ENCODE measurements at regions of chr5 and their contacts with region 1.

Region 1: GRCh38 chr5:91383027-91383955 is at the start of gene ARRDC3:
- DNase-seq: peak; percentile 96 to 98
- ATAC-seq: peak; percentile 30 to 61 (median 33)
- H3K4me3 ChIP-seq: peak within 1 kb of the TSS; percentile 82
- H3K4me3 Mint-ChIP-seq: peak within 1 kb of the TSS; percentile 99
- H3K27ac ChIP-seq: peak within 1 kb of the TSS; percentile 97
- H3K27ac Mint-ChIP-seq: peak within 1 kb of the TSS; percentile 100
- H3K4me1 ChIP-seq: no peaks in the 10 kb centered on the region
- H3K4me1 Mint-ChIP-seq: peaks cover 32 to 35% of the 10 kb centered on the region in 2 donors
- H3K27me3 ChIP-seq: no peaks in the 10 kb centered on the region
- H3K27me3 Mint-ChIP-seq: no peaks in the 10 kb centered on the region
- CTCF ChIP-seq: no peak
- total RNA-seq, gene ARRDC3: 117 to 375 (median 133) TPM

Region 2: DNA sequence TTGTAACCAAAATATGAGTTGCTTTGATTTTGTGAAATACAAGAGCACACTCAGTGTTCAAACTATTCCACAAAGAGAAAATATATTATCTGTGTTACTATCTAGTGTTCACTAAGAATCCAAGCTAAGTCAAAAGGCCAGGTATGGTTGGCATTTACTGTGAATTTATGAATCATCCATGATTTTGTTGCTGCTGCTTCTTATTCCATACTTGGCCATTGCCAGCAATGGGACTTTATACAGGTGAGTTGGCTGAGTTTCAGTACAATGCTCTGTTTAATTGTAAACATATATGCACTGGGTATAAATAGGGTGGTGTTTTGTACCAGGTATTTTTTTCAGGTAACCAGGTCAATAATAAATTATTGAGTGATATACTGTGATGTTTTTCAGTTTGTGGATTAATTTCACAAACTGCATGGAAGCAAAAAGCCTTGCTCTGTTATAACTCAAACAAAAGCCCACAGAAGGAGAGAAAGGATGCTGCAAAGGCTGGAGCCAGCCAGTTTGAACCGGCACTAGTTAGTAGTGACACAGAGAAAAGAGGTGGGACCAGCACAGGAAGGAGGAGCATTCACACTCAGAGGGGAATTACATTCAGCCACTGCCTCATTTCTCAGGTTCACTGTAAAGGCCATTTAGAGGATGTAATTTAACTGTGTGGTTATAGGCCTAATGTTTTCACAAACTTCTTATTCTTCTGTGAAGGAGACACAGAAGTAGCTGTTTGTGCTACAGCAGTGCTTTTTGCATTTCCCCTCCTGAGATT is 442.9 kb before region 1 on chr5:
- intact Hi-C with region 1: loop called (anchors 2 kb)
- DNase-seq: peak; percentile 44 to 58
- ATAC-seq: peak; percentile 96 to 100 (median 99)
- H3K4me3 ChIP-seq: no peak overlapping the region
- H3K4me3 Mint-ChIP-seq: no peak overlapping the region
- H3K27ac ChIP-seq: peak overlapping the region; percentile 56
- H3K27ac Mint-ChIP-seq: peak overlapping the region; percentile 75 to 78
- H3K4me1 ChIP-seq: peaks cover 2% of the 10 kb centered on the region
- H3K4me1 Mint-ChIP-seq: peaks cover 10 to 14% of the 10 kb centered on the region in 2 donors
- H3K27me3 ChIP-seq: no peaks in the 10 kb centered on the region
- H3K27me3 Mint-ChIP-seq: no peaks in the 10 kb centered on the region
- CTCF ChIP-seq: no peak

Region 3: GRCh38 chr5:91162534-91163381 is 220.5 kb before region 1 on chr5:
- intact Hi-C with region 1: loop called (anchors 2 kb)
- DNase-seq: peak; percentile 62 to 67
- ATAC-seq: peak; percentile 90 to 98 (median 95)
- H3K4me3 ChIP-seq: no peak overlapping the region
- H3K4me3 Mint-ChIP-seq: peak overlapping the region; percentile 33
- H3K27ac ChIP-seq: peak overlapping the region; percentile 67
- H3K27ac Mint-ChIP-seq: peak overlapping the region; percentile 79 to 91
- H3K4me1 ChIP-seq: peaks cover 20% of the 10 kb centered on the region
- H3K4me1 Mint-ChIP-seq: peaks cover 28% of the 10 kb centered on the region in 2 donors
- H3K27me3 ChIP-seq: no peaks in the 10 kb centered on the region
- H3K27me3 Mint-ChIP-seq: no peaks in the 10 kb centered on the region
- CTCF ChIP-seq: no peak

Region 4: DNA sequence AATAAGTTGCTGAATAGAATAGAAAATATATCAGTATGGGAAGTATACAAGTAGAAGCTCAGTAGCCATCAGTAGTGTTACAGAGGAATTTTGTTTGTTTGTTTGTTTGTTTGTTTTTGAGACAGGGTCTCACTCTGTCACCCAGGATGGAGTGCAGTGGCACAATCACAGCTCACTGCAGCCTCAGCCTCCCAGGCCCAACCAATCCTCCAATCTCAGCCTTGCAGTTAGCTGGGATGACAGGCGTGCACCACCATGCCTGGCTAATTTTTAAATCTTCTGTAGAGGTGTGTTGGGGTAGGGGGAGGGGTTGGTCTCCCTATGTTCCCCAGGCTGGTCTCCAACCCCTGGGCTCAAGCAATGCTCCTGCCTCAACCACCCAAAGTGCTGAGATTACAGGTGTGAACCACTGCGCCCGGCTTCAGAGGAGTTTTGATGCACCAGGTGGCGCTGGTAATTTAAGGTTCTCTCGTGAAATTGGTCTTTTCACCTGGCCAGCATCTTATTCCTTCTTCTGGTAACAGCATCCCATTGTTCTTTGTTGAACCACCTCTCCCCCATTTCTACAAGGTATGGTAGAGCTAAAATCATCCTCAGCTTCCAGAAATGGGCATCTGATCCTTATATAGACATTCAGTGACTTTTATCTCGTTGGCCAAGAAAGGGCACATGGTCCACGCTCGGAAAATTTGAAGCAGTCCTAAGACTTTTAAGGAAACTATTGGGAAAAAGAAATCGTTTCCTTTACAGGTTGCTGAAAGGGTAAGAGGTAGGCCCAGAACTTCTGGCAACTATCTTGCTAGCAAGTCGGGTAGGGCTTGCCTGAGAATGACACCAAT is 157.2 kb before region 1 on chr5:
- intact Hi-C with region 1: loop called (anchors 1 kb)
- DNase-seq: peak; percentile 26 to 76
- ATAC-seq: peak in 2 of 3 donors; percentile 45 to 50
- H3K4me3 ChIP-seq: no peak overlapping the region
- H3K4me3 Mint-ChIP-seq: no peak overlapping the region
- H3K27ac ChIP-seq: no peak overlapping the region
- H3K27ac Mint-ChIP-seq: no peak overlapping the region
- H3K4me1 ChIP-seq: no peaks in the 10 kb centered on the region
- H3K4me1 Mint-ChIP-seq: no peaks in the 10 kb centered on the region
- H3K27me3 ChIP-seq: no peaks in the 10 kb centered on the region
- H3K27me3 Mint-ChIP-seq: peaks cover 9 to 13% of the 10 kb centered on the region in 2 donors
- CTCF ChIP-seq: peak; percentile 42

Region 5: GRCh38 chr5:91311697-91312501 is 71.4 kb before region 1 on chr5:
- intact Hi-C with region 1: loop called (anchors 1 kb)
- DNase-seq: peak; percentile 60 to 87
- ATAC-seq: peak; percentile 70 to 87 (median 82)
- H3K4me3 ChIP-seq: no peak overlapping the region
- H3K4me3 Mint-ChIP-seq: peak overlapping the region; percentile 82
- H3K27ac ChIP-seq: peak overlapping the region; percentile 77
- H3K27ac Mint-ChIP-seq: peak overlapping the region; percentile 79 to 88
- H3K4me1 ChIP-seq: peaks cover 50% of the 10 kb centered on the region
- H3K4me1 Mint-ChIP-seq: peaks cover 40 to 48% of the 10 kb centered on the region in 2 donors
- H3K27me3 ChIP-seq: no peaks in the 10 kb centered on the region
- H3K27me3 Mint-ChIP-seq: no peaks in the 10 kb centered on the region
- CTCF ChIP-seq: no peak

Region 6: GRCh38 chr5:91456928-91457680 is 73.8 kb after region 1 on chr5:
- intact Hi-C with region 1: no loop called
- DNase-seq: no peak
- ATAC-seq: no peak
- H3K4me3 ChIP-seq: no peak overlapping the region
- H3K4me3 Mint-ChIP-seq: no peak overlapping the region
- H3K27ac ChIP-seq: no peak overlapping the region
- H3K27ac Mint-ChIP-seq: no peak overlapping the region
- H3K4me1 ChIP-seq: no peaks in the 10 kb centered on the region
- H3K4me1 Mint-ChIP-seq: peaks cover 12 to 13% of the 10 kb centered on the region in 2 donors
- H3K27me3 ChIP-seq: no peaks in the 10 kb centered on the region
- H3K27me3 Mint-ChIP-seq: peaks cover 0 to 2% of the 10 kb centered on the region in 2 donors
- CTCF ChIP-seq: no peak